ENCODE measurements at regions of chr5 and their contacts with region 1.

Region 1: DNA sequence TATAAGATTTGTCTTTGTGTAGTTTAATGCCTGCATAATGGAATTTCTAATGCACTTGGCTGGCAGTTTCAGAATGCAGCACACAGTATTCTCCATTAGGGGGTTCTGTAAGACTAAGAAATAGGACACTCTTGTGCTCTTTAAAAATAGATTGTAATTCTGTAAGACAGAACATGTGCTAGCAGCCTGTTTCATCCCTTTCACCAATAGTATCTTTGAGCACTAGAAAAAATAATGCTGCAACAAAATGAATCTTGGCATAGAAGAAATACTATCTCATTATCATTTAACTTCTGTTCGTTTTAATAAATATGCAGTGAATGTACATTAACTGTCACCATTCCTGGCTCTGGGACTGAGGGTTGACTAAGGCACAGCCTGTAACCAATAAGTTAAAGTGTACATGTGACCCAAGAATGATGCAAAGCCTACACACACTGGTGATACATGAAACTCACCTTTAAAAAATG is 23.8 kb upstream of the ZNF622 start:
- DNase-seq: peak in 1 of 35 experiments; percentile 46
- ATAC-seq: peak; percentile 59 to 83 (median 68)
- H3K4me3 ChIP-seq: no peak overlapping the region
- H3K4me3 Mint-ChIP-seq: no peak overlapping the region
- H3K27ac ChIP-seq: no peak overlapping the region
- H3K27ac Mint-ChIP-seq: no peak overlapping the region
- H3K4me1 ChIP-seq: peaks cover 0 to 2% of the 10 kb centered on the region in 2 experiments
- H3K4me1 Mint-ChIP-seq: peaks cover 48 to 54% (median 53%) of the 10 kb centered on the region in 3 donors
- H3K27me3 ChIP-seq: no peaks in the 10 kb centered on the region
- H3K27me3 Mint-ChIP-seq: no peaks in the 10 kb centered on the region

Region 2: GRCh38 chr5:16508730-16509531 is 19.6 kb after region 1 on chr5:
- CTCF ChIA-PET with region 1: interaction called in 1 of 2 experiments, 11 read pairs
- POLR2A ChIA-PET with region 1: no interaction called
- DNase-seq: no peak
- ATAC-seq: no peak
- H3K4me3 ChIP-seq: no peak overlapping the region
- H3K4me3 Mint-ChIP-seq: no peak overlapping the region
- H3K27ac ChIP-seq: no peak overlapping the region
- H3K27ac Mint-ChIP-seq: peak overlapping the region in 1 of 2 donors; percentile 36
- H3K4me1 ChIP-seq: peaks cover 0 to 7% of the 10 kb centered on the region in 2 experiments
- H3K4me1 Mint-ChIP-seq: peaks cover 45 to 50% (median 48%) of the 10 kb centered on the region in 3 donors
- H3K27me3 ChIP-seq: no peaks in the 10 kb centered on the region
- H3K27me3 Mint-ChIP-seq: no peaks in the 10 kb centered on the region

Region 3: DNA sequence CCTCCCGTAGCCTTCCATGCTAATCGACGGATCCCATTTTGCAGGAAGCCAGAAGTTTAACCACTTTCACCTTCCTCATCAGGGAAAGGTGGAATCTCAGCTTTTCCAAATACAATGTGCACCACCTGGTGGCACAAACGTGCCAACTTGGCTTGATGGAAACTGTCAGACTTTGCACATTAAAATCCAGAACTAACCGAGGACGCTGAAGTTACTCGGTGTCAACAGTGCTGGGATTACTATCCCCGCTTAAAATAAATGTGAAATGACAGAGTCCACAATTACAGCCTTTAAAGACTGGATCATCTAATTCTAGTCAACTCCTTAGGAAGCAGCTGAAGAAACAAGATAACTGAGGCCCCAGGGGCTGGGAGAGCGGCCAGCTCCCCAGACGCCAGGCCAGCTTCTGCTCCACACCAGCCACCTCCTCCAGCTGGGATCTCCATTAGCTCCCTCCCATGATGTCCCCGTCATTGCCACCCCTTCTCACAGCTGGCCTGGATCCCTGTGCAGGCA is 177.6 kb after region 1 on chr5:
- CTCF ChIA-PET with region 1: interaction called, 4 to 15 read pairs
- POLR2A ChIA-PET with region 1: no interaction called
- DNase-seq: peak in 18 of 35 experiments; percentile 7 to 56 (median 28)
- ATAC-seq: peak in 3 of 4 experiments; percentile 32 to 53 (median 50)
- H3K4me3 ChIP-seq: no peak overlapping the region
- H3K4me3 Mint-ChIP-seq: peak overlapping the region in 2 of 3 donors; percentile 13 to 19
- H3K27ac ChIP-seq: no peak overlapping the region
- H3K27ac Mint-ChIP-seq: no peak overlapping the region
- H3K4me1 ChIP-seq: peaks cover 3 to 16% of the 10 kb centered on the region in 2 experiments
- H3K4me1 Mint-ChIP-seq: peaks cover 11 to 23% (median 22%) of the 10 kb centered on the region in 3 donors
- H3K27me3 ChIP-seq: peaks cover 0 to 6% of the 10 kb centered on the region in 2 experiments
- H3K27me3 Mint-ChIP-seq: no peaks in the 10 kb centered on the region